Posterior vena cava (tissue), 2 donors: ENCODE measurements at regions of chr1 and their contacts with region 1.

Region 1: GRCh38 chr1:56491441-56491840 is 87.9 kb downstream of the PLPP3 start:
- DNase-seq: no peak

Region 2: GRCh38 chr1:56424744-56425508 is 66.5 kb before region 1 on chr1:
- intact Hi-C with region 1: loop called in 1 of 2 experiments (anchors 1 kb)
- DNase-seq: peak; percentile 87